ENCODE measurements at regions of chrX and their contacts with region 1.

Region 1: DNA sequence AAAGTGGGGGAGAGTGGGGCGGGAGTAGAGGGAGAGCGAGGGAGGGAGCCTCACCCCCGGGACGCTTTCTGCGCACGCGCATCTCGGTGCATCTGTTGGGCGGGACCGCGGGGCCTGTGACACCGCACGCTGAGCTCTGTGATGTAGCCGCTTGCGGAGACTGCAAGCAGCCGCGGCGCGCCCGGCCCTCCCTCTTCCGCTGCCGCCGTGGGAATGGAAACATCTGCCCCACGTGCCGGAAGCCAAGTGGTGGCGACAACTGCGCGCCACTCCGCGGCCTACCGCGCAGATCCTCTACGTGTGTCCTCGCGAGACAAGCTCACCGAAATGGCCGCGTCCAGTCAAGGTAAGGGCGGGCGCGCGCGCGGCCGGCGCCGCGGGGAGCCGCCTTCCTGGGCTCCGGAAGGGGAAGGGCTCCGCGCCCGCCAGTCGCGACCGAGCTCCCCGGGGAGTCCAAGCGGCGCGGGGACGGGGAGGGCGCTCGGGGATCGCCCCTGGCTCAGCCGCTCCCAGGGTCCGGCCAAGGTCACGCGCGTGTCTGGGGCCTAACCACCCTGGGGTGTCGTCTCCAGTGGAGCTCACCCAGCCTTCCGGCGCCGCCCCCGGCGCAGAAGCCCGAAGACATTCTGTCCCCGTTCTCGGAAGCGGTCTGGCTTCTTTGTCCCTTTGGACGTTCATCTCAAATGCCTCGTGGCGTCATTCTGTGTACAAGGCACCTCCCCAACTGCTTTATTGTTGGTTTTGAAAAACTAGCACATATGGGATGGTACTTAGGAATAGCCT is at the start of gene FUNDC2:
- DNase-seq: peak; percentile 96
- H3K4me3 Mint-ChIP-seq: peak within 1 kb of the TSS; percentile 83
- H3K27ac Mint-ChIP-seq: peak within 1 kb of the TSS; percentile 94
- H3K4me1 Mint-ChIP-seq: peaks cover 21% of the 10 kb centered on the region
- H3K27me3 Mint-ChIP-seq: no peaks in the 10 kb centered on the region
- total RNA-seq, gene FUNDC2: 95.1 to 95.9 TPM

Region 2: GRCh38 chrX:154986826-154987576 is 39.9 kb before region 1 on chrX:
- CTCF ChIA-PET with region 1: no interaction called
- POLR2A ChIA-PET with region 1: no interaction called
- intact Hi-C with region 1: loop called (anchors 2 kb)
- DNase-seq: no peak
- H3K4me3 Mint-ChIP-seq: no peak overlapping the region
- H3K27ac Mint-ChIP-seq: no peak overlapping the region
- H3K4me1 Mint-ChIP-seq: peaks cover 20% of the 10 kb centered on the region
- H3K27me3 Mint-ChIP-seq: no peaks in the 10 kb centered on the region

Region 3: DNA sequence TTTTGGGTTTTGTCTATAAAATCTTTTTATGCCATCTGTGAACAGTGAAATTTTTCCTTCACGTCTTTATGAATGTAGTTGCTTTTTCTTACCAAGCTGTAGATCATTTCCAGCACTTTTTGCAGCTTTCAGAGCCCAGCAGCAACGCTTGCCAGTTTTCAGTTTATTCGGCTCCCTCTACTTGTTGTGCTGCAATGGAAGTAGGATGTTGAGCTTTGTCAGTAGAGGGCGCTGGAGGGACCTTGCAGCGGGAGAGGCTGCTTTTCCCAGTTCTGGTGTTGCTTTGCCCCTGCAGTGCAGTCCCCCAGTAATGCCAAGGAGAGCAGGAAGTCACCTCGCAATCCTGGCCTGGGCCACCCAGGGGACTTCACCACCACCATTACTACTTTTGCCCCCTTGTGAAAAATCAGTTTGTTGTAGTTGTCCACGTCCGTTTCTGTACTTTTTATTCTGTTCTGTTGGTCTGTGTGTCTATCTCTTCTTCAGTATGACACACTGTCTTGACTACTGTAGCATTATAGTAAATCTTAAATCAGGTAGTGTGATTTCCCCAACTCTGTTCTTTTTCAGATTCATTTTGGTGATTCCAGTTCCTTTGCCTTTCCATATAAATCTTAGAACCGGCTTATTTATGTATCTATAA is 22.2 kb after region 1 on chrX:
- CTCF ChIA-PET with region 1: interaction called, 11 read pairs
- POLR2A ChIA-PET with region 1: no interaction called
- intact Hi-C with region 1: no loop called
- DNase-seq: peak; percentile 53
- H3K4me3 Mint-ChIP-seq: no peak overlapping the region
- H3K27ac Mint-ChIP-seq: peak overlapping the region; percentile 33
- H3K4me1 Mint-ChIP-seq: peaks cover 16% of the 10 kb centered on the region
- H3K27me3 Mint-ChIP-seq: no peaks in the 10 kb centered on the region

Region 4: GRCh38 chrX:155070975-155071693 is 44.2 kb after region 1 on chrX and contains the starts of genes BRCC3, CMC4 and MTCP1:
- CTCF ChIA-PET with region 1: no interaction called
- POLR2A ChIA-PET with region 1: interaction called, 5 read pairs
- intact Hi-C with region 1: loop called (anchors 1 kb)
- DNase-seq: peak; percentile 86
- H3K4me3 Mint-ChIP-seq: peak within 1 kb of the TSS; percentile 91
- H3K27ac Mint-ChIP-seq: peak within 1 kb of the TSS; percentile 90
- H3K4me1 Mint-ChIP-seq: peaks cover 51% of the 10 kb centered on the region
- H3K27me3 Mint-ChIP-seq: no peaks in the 10 kb centered on the region
- total RNA-seq, gene BRCC3: 24.4 to 26.7 TPM
- total RNA-seq, gene CMC4: 4.9 to 7.2 TPM
- total RNA-seq, gene MTCP1: 16.2 to 19.2 TPM

Measured in activated CD4-positive, alpha-beta memory T cell treated with anti-CD3 and anti-CD28 coated beads for 36 hours (primary cell).